Dendritic cell treated with granulocyte-macrophage colony-stimulating factor and Interleukin-4, amounts not matched to agents 40 ng/mL and 50 ng/mL, for 4 days (primary cell): ENCODE measurements at regions of chr1 and their contacts with region 1.

Region 1: GRCh38 chr1:11650331-11650991 is 3.8 kb downstream of the FBXO2 start:
- H3K4me3 Mint-ChIP-seq: peak overlapping the region; percentile 37
- H3K27ac Mint-ChIP-seq: no peak overlapping the region
- H3K4me1 Mint-ChIP-seq: peaks cover 22% of the 10 kb centered on the region
- H3K27me3 Mint-ChIP-seq: peaks cover 78% of the 10 kb centered on the region

Region 2: GRCh38 chr1:11563560-11564069 is 86.8 kb before region 1 on chr1:
- intact Hi-C with region 1: no loop called
- H3K4me3 Mint-ChIP-seq: no peak overlapping the region
- H3K27ac Mint-ChIP-seq: no peak overlapping the region
- H3K4me1 Mint-ChIP-seq: no peaks in the 10 kb centered on the region
- H3K27me3 Mint-ChIP-seq: peaks cover 12% of the 10 kb centered on the region

Region 3: GRCh38 chr1:11711490-11711889 is 61.0 kb after region 1 on chr1:
- intact Hi-C with region 1: loop called (anchors 2 kb)
- H3K4me3 Mint-ChIP-seq: no peak overlapping the region
- H3K27ac Mint-ChIP-seq: no peak overlapping the region
- H3K4me1 Mint-ChIP-seq: peaks cover 11% of the 10 kb centered on the region
- H3K27me3 Mint-ChIP-seq: peaks cover 32% of the 10 kb centered on the region

Region 4: DNA sequence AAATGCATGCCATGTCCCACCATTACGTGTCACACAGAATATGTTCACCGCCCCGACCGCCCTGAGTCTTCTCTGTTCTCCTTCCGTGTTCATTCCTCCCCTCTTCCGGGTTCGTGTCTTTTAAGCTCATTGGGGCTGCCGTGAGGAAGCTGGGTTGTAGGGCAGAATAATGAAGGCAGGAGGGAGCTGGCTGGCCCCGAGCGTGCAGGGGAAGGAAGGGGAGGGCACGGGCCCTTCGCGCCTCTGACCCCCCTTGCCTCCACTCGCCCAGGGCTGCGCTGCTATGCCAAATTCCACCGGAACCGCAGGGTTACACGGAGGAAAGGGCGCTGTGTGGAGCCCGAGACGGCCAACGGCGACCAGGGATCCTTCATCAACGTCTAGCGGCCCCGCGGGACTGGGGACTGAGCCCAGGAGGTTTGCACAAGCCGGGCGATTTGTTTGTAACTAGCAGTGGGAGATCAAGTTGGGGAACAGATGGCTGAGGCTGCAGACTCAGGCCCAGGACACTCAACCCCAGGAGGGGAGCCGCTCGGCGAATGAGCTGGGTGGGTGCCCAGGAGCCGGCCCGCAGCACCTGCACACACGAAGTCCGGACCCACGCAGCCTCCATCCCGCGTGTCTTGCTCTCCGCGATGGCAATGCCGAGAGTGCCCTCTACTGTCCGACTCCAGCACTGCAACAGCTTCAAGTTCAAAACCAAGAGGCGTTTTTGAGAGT is 69.0 kb after region 1 on chr1:
- intact Hi-C with region 1: loop called (anchors 1 kb)
- H3K4me3 Mint-ChIP-seq: peak overlapping the region; percentile 79
- H3K27ac Mint-ChIP-seq: peak overlapping the region; percentile 92
- H3K4me1 Mint-ChIP-seq: peaks cover 15% of the 10 kb centered on the region
- H3K27me3 Mint-ChIP-seq: no peaks in the 10 kb centered on the region

Region 5: GRCh38 chr1:12001249-12001917 is 350.9 kb after region 1 on chr1:
- intact Hi-C with region 1: no loop called
- H3K4me3 Mint-ChIP-seq: no peak overlapping the region
- H3K27ac Mint-ChIP-seq: no peak overlapping the region
- H3K4me1 Mint-ChIP-seq: no peaks in the 10 kb centered on the region
- H3K27me3 Mint-ChIP-seq: no peaks in the 10 kb centered on the region